Vagina (tissue), 2 donors: ENCODE measurements at regions of chr18 and their contacts with region 1.

Region 1: DNA sequence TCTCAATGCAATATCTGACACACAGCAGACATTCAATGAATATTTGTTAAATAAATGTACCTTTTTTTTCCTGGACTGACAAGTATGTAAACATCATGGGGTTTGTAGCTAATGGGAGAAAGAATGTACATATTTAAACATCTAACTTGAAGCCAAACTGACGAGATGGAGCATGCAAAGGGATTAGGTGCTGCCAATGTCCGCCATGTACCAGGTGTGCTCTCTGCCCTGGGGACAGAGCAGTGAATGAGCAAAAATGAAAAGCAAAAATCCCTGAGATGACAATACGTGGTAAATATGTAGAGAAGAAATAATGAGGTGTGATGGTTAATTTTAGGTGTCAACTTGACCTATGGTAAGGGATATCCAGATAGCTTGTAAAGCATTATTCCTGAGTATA is 247.4 kb upstream of the CELF4 start:
- DNase-seq: no peak
- H3K4me3 ChIP-seq: no peak overlapping the region
- H3K27ac ChIP-seq: no peak overlapping the region
- H3K4me1 ChIP-seq: no peaks in the 10 kb centered on the region
- H3K27me3 ChIP-seq: no peaks in the 10 kb centered on the region
- CTCF ChIP-seq: no peak
- POLR2A ChIP-seq: no peak

Region 2: DNA sequence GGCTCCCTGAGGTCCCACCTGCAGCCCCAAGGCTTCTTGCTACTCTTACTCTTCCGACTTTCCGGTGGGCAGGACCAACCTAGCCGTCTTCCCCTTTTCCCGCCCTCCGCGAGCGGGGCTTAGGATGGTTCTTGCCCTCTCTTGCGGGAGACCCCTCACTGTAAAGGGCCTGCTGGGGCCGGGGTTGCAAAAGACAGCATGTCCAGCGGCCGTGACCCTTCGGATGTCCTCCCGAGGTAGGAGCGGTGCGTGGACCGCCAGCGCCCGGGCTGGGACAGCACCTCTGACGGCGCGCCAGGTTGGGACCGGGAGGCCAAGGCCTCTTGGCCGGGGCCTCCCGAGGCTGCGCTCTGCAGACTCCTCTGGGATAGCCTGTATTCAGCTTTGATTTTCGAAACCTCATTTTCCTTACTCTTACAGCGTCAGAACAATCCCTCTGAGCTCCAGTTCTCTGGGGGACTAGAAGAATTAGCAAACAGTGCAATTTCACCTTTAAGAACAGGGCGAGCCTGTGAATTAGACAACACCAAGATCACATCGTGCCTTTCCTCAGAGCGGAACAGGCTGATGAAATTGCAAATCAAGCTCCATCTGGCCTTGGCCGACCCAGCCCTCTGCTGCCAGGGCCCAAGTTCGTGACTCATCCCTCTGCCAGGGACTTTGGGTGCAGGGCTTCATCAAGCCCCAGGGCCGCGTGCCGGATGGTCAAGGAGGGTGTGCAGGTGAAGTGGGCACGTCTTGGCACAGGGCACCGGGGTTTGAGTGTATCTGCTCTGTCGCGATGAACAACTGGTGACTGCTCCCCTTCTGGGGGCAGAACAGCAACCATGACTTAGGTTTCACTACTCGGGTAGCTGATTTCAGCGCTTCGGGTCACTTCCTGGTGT is 1624.9 kb before region 1 on chr18:
- intact Hi-C with region 1: no loop called
- DNase-seq: no peak
- H3K4me3 ChIP-seq: peak overlapping the region; percentile 64 to 67
- H3K27ac ChIP-seq: no peak overlapping the region
- H3K4me1 ChIP-seq: peaks cover 25% of the 10 kb centered on the region
- H3K27me3 ChIP-seq: no peaks in the 10 kb centered on the region
- CTCF ChIP-seq: no peak
- POLR2A ChIP-seq: no peak

Region 3: DNA sequence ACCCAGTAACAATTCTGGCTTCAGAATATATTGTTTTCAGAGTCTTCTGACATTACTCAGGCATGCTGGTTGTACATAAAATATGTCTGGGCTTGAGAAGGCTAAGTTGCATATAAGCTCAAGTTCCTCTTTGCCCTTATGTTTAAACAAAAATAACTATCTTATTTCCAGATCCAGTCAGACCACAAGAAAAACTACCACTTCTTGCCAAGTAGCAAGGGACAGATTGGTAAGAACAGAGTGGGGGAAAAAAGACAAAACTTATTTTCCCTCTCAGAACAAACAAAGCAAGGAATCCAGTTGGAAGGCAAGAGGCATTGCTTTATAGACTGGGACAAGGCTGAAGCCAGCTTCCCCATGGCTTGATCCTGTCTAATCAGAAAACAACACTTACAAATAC is 789.4 kb after region 1 on chr18:
- intact Hi-C with region 1: loop called (anchors 10 kb)
- DNase-seq: no peak
- H3K4me3 ChIP-seq: no peak overlapping the region
- H3K27ac ChIP-seq: no peak overlapping the region
- H3K4me1 ChIP-seq: no peaks in the 10 kb centered on the region
- H3K27me3 ChIP-seq: no peaks in the 10 kb centered on the region
- CTCF ChIP-seq: no peak
- POLR2A ChIP-seq: no peak